Caco-2 (cell line): ENCODE measurements at regions of chr19 and their contacts with region 1.

Region 1: GRCh38 chr19:43983912-43984686 is at the start of gene ZNF155:
- DNase-seq: peak; percentile 92 to 96
- H3K4me3 ChIP-seq: peak within 1 kb of the TSS; percentile 98
- H3K4me3 Mint-ChIP-seq: peak within 1 kb of the TSS; percentile 99
- H3K27ac Mint-ChIP-seq: peak within 1 kb of the TSS; percentile 95
- H3K4me1 ChIP-seq: no peaks in the 10 kb centered on the region
- H3K4me1 Mint-ChIP-seq: no peaks in the 10 kb centered on the region
- H3K27me3 ChIP-seq: no peaks in the 10 kb centered on the region
- H3K27me3 Mint-ChIP-seq: no peaks in the 10 kb centered on the region
- CTCF ChIP-seq: no peak
- total RNA-seq, gene ZNF155: 9.4 and 10.3 TPM in 2 replicates

Region 2: DNA sequence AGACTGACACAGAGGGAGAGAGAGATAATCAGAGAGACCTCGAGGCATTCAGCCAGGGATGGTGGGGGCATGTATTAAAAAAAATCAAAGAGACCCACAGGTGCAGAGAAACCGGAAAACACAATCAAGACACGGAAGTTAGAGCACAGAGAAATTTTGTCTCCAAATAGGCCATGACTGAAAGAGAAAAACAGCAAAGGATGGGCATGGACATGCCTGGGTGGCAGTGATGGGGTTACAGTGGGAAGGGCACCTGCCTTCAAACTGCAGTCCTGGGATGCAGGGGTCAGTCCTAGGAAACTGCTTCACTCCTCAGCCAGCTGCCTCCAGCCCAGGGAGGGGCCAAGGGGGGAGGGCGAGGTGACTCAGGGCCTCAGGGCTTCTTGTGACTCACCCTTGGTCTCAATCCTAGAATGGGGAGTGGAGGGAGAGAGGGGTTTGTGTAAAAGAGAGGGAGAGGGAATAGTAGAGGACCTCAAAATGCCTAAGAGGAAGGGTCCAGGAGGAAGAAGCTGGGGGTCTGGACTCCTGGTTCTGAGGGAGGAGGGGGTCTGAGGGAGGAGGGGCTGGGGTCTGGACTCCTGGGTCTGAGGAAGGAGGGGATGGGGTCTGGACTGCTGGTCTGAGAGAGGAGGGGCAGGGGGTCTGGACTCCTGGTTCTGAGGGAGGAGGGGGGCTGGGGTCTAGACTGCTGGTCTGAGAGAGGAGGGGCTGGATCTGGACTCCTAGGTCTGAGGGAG is 199.7 kb before region 1 on chr19:
- CTCF ChIA-PET with region 1: no interaction called
- POLR2A ChIA-PET with region 1: no interaction called
- intact Hi-C with region 1: no loop called
- DNase-seq: peak; percentile 68 to 82
- H3K4me3 ChIP-seq: no peak overlapping the region
- H3K4me3 Mint-ChIP-seq: peak overlapping the region; percentile 28
- H3K27ac Mint-ChIP-seq: peak overlapping the region; percentile 1
- H3K4me1 ChIP-seq: peaks cover 10% of the 10 kb centered on the region
- H3K4me1 Mint-ChIP-seq: peaks cover 21% of the 10 kb centered on the region
- H3K27me3 ChIP-seq: no peaks in the 10 kb centered on the region
- H3K27me3 Mint-ChIP-seq: no peaks in the 10 kb centered on the region
- CTCF ChIP-seq: no peak

Region 3: DNA sequence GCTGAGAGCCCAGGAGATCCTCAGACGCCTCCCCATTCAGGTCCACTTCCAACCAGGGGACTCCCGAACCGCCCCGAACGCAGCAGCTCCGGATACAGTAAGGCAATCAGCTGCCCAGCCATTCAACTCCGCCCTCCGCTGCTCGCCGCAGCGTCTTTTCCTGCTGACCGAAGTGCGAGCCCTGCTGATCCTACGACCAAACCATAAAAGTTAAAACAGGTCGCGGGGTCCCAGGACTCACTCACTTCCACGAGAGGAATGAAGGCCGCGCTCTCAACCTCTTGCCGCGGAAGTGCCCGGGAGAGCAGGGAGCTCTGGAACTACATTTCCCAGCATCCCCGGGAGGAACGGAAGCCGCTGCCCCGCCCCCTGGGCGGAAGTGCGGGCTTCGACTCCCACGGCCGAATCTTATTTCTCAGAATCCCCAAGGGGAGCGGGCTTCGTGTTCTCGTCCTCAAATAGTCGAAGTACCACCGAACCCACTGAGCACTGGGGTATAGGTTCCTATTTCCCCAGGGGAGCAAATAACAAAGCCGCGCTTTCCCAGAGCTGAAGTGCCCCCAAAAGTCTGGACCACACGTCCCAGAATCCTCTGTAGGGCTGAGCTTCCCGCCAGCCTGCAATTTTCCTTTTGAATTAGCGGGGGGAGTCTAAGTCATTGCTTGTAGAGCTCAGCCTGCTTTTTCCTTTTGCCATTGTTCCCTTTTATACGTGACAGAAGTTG is 49.0 kb before region 1 on chr19 and contains the start of gene ZNF45:
- CTCF ChIA-PET with region 1: no interaction called
- POLR2A ChIA-PET with region 1: no interaction called
- intact Hi-C with region 1: loop called (anchors 5 kb)
- DNase-seq: peak; percentile 90 to 92
- H3K4me3 ChIP-seq: peak within 1 kb of the TSS; percentile 52
- H3K4me3 Mint-ChIP-seq: peak within 1 kb of the TSS; percentile 94
- H3K27ac Mint-ChIP-seq: peak within 1 kb of the TSS; percentile 88
- H3K4me1 ChIP-seq: peaks cover 5% of the 10 kb centered on the region; the same call in 1 of the 2 replicates
- H3K4me1 Mint-ChIP-seq: peaks cover 11% of the 10 kb centered on the region
- H3K27me3 ChIP-seq: no peaks in the 10 kb centered on the region
- H3K27me3 Mint-ChIP-seq: peaks cover under 1% of the 10 kb centered on the region
- CTCF ChIP-seq: no peak
- total RNA-seq, gene ZNF45: 14.8 and 14.9 TPM in 2 replicates

Region 4: DNA sequence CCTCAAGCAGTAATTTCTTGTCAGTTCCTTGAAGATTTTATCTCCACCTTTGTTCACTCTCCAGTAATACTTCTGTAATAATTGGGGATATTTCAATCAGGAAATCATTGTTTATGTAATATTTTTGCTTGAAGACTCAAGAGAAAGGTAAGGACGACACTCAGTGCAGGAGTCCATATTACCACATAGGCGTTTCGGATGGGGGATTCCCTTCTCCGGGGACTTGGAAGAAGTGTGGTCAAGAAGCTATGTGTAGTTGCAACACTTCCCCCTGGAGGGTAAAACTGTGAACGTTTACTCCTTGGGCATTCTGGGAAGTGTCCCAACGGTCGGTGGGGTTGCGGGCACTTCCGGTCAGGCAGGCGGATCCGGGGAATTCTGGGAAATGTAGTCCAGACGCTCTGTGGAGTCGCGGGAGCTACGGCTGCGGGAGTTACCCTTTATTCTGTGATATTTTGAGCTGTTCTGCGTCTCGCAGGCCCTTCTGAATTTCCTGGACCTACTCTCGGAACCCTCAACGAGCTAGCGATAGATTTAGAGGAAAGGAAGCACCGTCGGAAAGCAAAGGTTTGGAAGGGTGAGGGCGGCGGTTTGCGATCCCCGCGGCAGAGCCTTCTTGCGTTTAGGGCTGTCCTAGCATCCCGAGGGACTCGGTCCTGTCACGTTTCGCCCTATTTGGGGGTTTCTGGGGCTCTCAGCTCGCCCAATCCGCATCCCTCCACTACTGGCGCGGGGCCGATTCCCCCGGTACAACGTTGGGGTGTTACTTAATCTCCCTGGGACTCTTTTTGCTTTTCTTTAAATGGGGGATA is 33.1 kb before region 1 on chr19 and contains the start of gene ZNF221:
- CTCF ChIA-PET with region 1: no interaction called
- POLR2A ChIA-PET with region 1: interaction called, 3 read pairs
- intact Hi-C with region 1: loop called (anchors 1 kb)
- DNase-seq: peak; percentile 94 to 95
- H3K4me3 ChIP-seq: peak within 1 kb of the TSS; percentile 58
- H3K4me3 Mint-ChIP-seq: peak within 1 kb of the TSS; percentile 100
- H3K27ac Mint-ChIP-seq: peak within 1 kb of the TSS; percentile 93
- H3K4me1 ChIP-seq: no peaks in the 10 kb centered on the region
- H3K4me1 Mint-ChIP-seq: no peaks in the 10 kb centered on the region
- H3K27me3 ChIP-seq: no peaks in the 10 kb centered on the region
- H3K27me3 Mint-ChIP-seq: peaks cover 11% of the 10 kb centered on the region
- CTCF ChIP-seq: peak; percentile 19 to 35
- total RNA-seq, gene ZNF221: 4.3 and 6.2 TPM in 2 replicates

Region 5: DNA sequence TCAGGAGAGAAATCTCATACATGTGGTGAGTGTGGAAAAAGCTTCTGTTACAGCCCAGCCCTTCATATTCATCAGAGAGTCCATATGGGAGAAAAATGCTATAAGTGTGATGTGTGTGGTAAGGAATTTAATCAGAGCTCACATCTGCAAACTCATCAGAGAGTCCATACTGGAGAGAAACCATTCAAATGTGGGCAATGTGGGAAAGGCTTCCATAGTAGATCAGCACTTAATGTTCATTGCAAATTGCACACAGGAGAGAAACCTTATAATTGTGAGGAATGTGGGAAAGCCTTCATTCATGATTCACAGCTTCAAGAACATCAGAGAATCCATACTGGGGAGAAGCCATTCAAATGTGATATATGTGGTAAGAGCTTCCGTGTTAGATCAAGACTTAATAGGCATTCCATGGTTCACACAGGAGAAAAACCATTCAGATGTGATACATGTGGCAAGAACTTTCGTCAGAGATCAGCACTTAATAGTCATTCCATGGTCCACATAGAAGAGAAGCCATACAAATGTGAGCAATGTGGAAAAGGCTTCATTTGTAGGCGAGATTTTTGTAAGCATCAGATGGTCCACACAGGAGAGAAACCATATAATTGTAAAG is 17.9 kb before region 1 on chr19:
- CTCF ChIA-PET with region 1: no interaction called
- POLR2A ChIA-PET with region 1: no interaction called
- intact Hi-C with region 1: no loop called
- DNase-seq: no peak
- H3K4me3 ChIP-seq: no peak overlapping the region
- H3K4me3 Mint-ChIP-seq: no peak overlapping the region
- H3K27ac Mint-ChIP-seq: no peak overlapping the region
- H3K4me1 ChIP-seq: no peaks in the 10 kb centered on the region
- H3K4me1 Mint-ChIP-seq: no peaks in the 10 kb centered on the region
- H3K27me3 ChIP-seq: no peaks in the 10 kb centered on the region; the same call in 1 of the 2 replicates
- H3K27me3 Mint-ChIP-seq: no peaks in the 10 kb centered on the region
- CTCF ChIP-seq: no peak

Region 6: DNA sequence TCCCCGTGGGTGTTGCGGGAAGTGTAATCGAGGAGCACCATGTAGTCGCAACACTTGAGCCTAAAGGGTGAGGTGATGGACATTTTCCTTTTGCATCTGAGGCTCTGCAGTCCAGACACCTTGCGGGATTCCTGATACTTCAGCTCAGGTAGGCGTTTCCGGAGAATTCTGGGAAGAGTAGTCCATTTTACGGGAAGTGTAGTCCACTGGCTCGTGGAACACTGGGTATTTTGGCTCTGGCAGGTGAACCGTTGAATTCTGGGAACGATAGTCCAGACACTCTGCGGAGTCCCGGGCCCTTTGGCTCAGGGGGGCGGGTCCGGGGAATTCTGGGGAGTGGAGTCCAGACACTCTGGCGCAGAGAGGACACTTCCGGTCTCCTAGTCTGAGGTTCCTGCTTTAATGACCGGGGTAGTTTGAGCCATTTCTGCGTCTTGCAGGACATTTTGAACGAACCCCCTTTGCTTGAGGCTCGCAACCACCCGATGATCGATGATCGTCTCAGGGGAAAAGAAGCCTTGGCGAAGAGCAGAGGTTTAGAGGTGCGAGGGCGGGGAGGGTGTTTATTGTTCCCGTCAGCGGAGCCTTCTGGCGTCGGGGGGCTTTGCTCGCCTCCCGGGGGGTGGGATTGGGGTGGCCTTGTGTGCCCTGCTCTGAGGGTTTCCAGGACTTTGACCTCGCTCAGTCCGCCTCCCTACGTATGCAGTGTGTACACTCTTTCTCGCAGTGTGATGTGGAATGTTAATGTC is 67.7 kb after region 1 on chr19 and contains the start of gene ZNF223:
- CTCF ChIA-PET with region 1: no interaction called
- POLR2A ChIA-PET with region 1: no interaction called
- intact Hi-C with region 1: loop called (anchors 1 kb)
- DNase-seq: peak; percentile 98
- H3K4me3 ChIP-seq: peak within 1 kb of the TSS; percentile 69
- H3K4me3 Mint-ChIP-seq: peak within 1 kb of the TSS; percentile 74
- H3K27ac Mint-ChIP-seq: peak within 1 kb of the TSS; percentile 85
- H3K4me1 ChIP-seq: peaks cover 7% of the 10 kb centered on the region
- H3K4me1 Mint-ChIP-seq: peaks cover 30% of the 10 kb centered on the region
- H3K27me3 ChIP-seq: no peaks in the 10 kb centered on the region
- H3K27me3 Mint-ChIP-seq: no peaks in the 10 kb centered on the region
- CTCF ChIP-seq: no peak
- total RNA-seq, gene ZNF223: 9.9 and 11.3 TPM in 2 replicates

Region 7: GRCh38 chr19:44071824-44072542 is 87.9 kb after region 1 on chr19 and contains the start of gene ZNF284:
- CTCF ChIA-PET with region 1: no interaction called
- POLR2A ChIA-PET with region 1: no interaction called
- intact Hi-C with region 1: loop called (anchors 1 kb)
- DNase-seq: peak; percentile 91 to 94
- H3K4me3 ChIP-seq: peak within 1 kb of the TSS; percentile 77
- H3K4me3 Mint-ChIP-seq: peak within 1 kb of the TSS; percentile 83
- H3K27ac Mint-ChIP-seq: peak within 1 kb of the TSS; percentile 85
- H3K4me1 ChIP-seq: peaks cover 3% of the 10 kb centered on the region; the same call in 1 of the 2 replicates
- H3K4me1 Mint-ChIP-seq: peaks cover 14% of the 10 kb centered on the region
- H3K27me3 ChIP-seq: no peaks in the 10 kb centered on the region
- H3K27me3 Mint-ChIP-seq: no peaks in the 10 kb centered on the region
- CTCF ChIP-seq: no peak
- total RNA-seq, gene ZNF284: 2.3 and 3.6 TPM in 2 replicates

Region 8: DNA sequence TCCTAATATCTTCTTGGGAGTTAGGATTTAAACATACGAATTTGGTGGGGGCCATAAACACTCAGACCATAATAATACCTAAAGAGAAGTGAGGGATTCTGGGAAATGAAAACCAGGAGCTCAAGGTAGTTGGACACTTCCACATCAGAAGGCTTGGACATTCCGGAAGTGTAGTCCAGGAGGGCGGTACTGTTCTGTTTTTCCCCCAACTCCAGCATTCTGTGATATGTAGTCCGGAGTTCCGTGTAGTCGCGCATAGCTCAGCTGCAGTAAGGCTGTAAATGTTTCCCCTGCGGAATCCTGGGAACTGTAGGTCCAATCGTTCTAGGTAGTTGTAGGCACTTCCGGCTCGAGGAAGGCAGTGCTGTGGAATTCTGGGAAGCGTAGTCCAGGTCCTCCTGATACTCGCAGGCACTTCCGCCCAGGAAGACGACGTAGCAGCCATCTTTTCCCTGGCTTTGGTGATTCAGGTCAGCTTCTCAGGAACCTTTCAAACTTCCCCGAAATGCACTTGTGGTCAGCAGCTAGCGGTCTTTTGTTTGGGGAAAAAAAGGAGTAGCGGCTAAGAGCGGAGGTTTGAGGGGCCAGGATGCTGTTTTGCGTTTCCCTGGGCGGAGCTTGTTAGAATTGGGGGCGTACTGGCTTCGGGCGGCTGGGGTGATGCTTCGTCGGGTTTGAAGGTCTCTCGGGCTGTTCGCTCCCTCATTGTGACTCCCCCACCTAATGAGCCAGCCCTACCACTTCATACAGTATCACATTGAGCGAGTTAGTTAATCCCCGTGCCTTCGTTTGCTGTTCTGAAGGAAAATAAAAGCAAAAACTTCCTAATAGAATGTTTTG is 180.8 kb after region 1 on chr19 and contains the start of gene ZNF226:
- CTCF ChIA-PET with region 1: no interaction called
- POLR2A ChIA-PET with region 1: no interaction called
- intact Hi-C with region 1: loop called (anchors 10 kb)
- DNase-seq: peak; percentile 95 to 98
- H3K4me3 ChIP-seq: peak within 1 kb of the TSS; percentile 79
- H3K4me3 Mint-ChIP-seq: peak within 1 kb of the TSS; percentile 95
- H3K27ac Mint-ChIP-seq: peak within 1 kb of the TSS; percentile 98
- H3K4me1 ChIP-seq: 0 out of 2 replicates have a peak, but pooled peaks cover 10% of the 10 kb centered on the region
- H3K4me1 Mint-ChIP-seq: no peaks in the 10 kb centered on the region
- H3K27me3 ChIP-seq: no peaks in the 10 kb centered on the region
- H3K27me3 Mint-ChIP-seq: no peaks in the 10 kb centered on the region
- CTCF ChIP-seq: no peak
- total RNA-seq, gene ZNF226: 27.0 and 28.0 TPM in 2 replicates